Activated CD8-positive, alpha-beta T cell treated with anti-CD3 and anti-CD28 coated beads for 36 hours (primary cell): ENCODE measurements at regions of chr14 and their contacts with region 1.

Region 1: DNA sequence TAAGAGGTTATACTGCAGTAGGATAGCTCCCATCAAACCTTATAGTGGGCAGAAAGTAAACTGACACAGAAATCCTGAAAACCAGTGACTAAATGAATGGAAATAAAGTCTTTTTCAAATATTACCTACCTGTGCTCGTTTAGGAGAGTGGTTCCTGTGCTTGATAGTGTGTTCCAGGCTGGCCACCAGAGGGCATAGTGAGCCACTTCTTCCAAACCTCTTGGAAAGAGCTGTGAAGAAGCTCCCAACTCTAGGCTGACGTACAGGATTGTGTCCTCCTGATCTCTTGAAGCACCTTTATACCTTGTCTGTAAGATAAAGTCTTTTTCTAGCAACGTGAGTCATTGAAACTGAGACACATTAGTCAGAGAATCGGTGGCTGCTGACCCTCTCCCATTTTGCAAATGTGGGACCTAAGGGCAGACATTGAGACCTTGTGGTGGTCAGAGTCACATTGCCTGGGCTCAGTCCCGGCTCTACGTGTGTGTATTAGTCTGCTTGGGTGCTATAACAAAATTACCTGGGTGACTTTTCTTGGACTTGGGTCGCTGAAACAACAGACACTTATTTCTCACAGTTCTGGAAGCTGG is 17.6 kb downstream of the TDP1 start:
- DNase-seq: peak; percentile 62
- ATAC-seq: peak; percentile 53
- H3K4me3 Mint-ChIP-seq: no peak overlapping the region
- H3K27ac Mint-ChIP-seq: no peak overlapping the region
- H3K4me1 Mint-ChIP-seq: peaks cover 8% of the 10 kb centered on the region
- H3K27me3 Mint-ChIP-seq: no peaks in the 10 kb centered on the region
- CTCF ChIP-seq: peak; percentile 66

Region 2: DNA sequence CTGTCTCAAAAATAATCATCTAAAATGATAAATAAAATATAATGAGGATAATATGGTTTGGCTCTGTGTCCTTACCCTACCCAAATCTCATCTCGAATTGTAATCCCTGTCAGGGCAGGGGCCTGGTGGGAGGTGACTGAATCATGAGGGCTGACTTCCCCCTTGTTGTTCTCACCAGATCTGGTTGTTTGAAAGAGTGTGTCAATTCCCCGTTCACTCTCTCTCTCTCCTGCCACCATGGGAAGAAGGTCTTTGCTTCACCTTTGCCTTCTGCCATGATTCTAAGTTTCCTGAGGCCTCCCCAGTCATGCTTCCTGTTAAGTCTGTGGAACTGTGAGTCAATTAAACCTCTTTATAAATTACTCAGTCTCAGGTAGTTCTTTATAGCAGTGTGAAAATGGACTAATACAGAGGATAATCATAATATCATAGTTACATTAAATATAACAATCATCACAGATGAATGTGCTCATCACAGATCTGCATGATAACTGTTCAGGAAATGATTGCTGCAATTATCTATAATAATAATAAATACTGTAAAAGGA is 31.4 kb before region 1 on chr14:
- CTCF ChIA-PET with region 1: interaction called, 76 read pairs
- POLR2A ChIA-PET with region 1: no interaction called
- intact Hi-C with region 1: no loop called
- DNase-seq: peak; percentile 6
- ATAC-seq: peak; percentile 26
- H3K4me3 Mint-ChIP-seq: no peak overlapping the region
- H3K27ac Mint-ChIP-seq: no peak overlapping the region
- H3K4me1 Mint-ChIP-seq: peaks cover 5% of the 10 kb centered on the region
- H3K27me3 Mint-ChIP-seq: no peaks in the 10 kb centered on the region
- CTCF ChIP-seq: no peak

Region 3: DNA sequence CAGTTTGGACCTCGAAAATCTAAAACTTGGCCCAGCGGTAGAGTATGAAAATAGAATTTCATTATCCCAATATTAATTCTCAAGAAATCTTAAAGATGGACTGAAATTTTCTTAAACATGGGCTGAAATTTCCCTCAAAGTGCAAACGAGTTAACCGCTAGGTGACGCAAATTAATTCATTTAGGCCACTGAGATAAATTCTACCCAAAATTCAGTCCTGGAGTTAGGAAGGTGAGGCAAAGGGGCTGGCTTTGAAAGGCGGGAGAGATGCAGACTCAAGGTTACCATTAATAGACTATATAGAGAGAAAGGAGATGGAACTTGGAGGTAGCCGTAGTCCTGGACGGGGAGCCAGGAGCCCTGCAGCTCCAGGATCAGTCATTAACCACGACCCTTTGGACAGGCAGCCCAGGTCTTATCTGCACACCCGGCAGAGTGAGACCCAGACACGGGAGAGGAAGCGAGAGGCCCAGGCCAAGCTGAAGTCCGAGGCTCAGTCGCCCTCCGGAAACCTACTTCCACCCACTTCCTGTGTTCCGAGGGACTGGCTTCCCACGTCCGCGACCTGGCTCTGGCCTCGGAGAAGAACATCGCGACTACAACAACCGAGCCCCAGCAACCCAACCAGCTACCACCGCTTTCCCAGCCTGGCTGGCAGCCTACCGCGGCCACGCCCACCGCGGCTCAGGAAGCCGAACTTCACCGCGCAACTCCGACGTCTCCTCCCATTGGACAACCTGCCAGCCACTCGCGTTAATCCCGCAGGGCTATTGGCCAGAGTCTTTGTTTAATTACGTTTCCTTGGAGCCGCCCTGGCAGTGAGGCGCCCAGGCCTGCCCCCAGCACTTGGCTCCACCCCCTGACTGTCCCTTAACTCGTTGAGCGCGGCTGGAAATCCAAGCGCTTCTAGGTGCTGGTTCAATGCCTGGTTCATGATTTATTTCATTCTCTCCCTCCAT is 19.0 kb before region 1 on chr14 and contains the start of gene EFCAB11:
- CTCF ChIA-PET with region 1: interaction called, 59 read pairs
- POLR2A ChIA-PET with region 1: interaction called, 5 read pairs
- intact Hi-C with region 1: no loop called
- DNase-seq: peak; percentile 97
- ATAC-seq: peak; percentile 86
- H3K4me3 Mint-ChIP-seq: peak within 1 kb of the TSS; percentile 92
- H3K27ac Mint-ChIP-seq: peak within 1 kb of the TSS; percentile 92
- H3K4me1 Mint-ChIP-seq: peaks cover 31% of the 10 kb centered on the region
- H3K27me3 Mint-ChIP-seq: no peaks in the 10 kb centered on the region
- CTCF ChIP-seq: no peak
- total RNA-seq, gene EFCAB11: 6.6 to 8.4 TPM

Region 4: GRCh38 chr14:89983375-89983774 is 10.0 kb after region 1 on chr14:
- CTCF ChIA-PET with region 1: interaction called, 18 read pairs
- POLR2A ChIA-PET with region 1: no interaction called
- intact Hi-C with region 1: no loop called
- DNase-seq: no peak
- ATAC-seq: no peak
- H3K4me3 Mint-ChIP-seq: no peak overlapping the region
- H3K27ac Mint-ChIP-seq: no peak overlapping the region
- H3K4me1 Mint-ChIP-seq: no peaks in the 10 kb centered on the region
- H3K27me3 Mint-ChIP-seq: no peaks in the 10 kb centered on the region
- CTCF ChIP-seq: no peak

Region 5: GRCh38 chr14:90003908-90004307 is 30.6 kb after region 1 on chr14:
- CTCF ChIA-PET with region 1: interaction called, 18 read pairs
- POLR2A ChIA-PET with region 1: no interaction called
- intact Hi-C with region 1: no loop called
- DNase-seq: no peak
- ATAC-seq: peak; percentile 56
- H3K4me3 Mint-ChIP-seq: no peak overlapping the region
- H3K27ac Mint-ChIP-seq: peak overlapping the region; percentile 15
- H3K4me1 Mint-ChIP-seq: peaks cover 11% of the 10 kb centered on the region
- H3K27me3 Mint-ChIP-seq: no peaks in the 10 kb centered on the region
- CTCF ChIP-seq: no peak

Region 6: DNA sequence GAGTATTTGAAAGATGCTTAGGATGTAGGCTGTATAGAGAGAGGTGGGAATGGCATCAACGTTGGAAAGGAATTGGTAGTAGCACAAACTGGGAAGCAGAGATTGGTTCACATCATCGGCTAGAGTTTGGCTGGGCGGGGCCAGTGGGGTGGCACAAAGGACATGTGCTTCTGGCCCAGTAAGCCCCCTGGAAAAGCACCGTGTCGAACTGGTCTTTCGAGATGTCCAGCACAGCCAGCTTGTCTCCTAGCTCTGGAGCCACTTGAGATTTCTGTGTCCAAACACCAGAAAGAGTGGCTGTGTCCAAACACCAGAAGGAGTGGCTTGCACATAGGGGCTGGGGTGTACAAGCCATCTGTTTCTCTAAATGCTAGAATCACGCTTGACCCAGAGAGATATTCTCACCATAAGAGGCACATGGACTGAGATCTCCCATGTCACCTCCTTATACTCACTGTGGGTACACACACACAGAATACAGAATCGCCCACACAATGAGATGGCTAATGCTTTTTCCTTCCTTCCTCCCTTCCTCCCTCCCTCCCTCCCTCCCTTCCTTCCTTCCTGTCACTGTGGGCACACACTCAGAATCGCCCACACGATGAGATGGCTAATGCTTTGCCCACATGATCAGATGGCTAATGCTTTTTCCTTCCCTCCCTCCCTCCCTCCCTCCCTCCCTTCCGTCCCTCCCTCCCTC is 46.6 kb after region 1 on chr14:
- CTCF ChIA-PET with region 1: interaction called, 11 read pairs
- POLR2A ChIA-PET with region 1: no interaction called
- intact Hi-C with region 1: no loop called
- DNase-seq: peak; percentile 6
- ATAC-seq: peak; percentile 42
- H3K4me3 Mint-ChIP-seq: no peak overlapping the region
- H3K27ac Mint-ChIP-seq: peak overlapping the region; percentile 54
- H3K4me1 Mint-ChIP-seq: peaks cover 9% of the 10 kb centered on the region
- H3K27me3 Mint-ChIP-seq: no peaks in the 10 kb centered on the region
- CTCF ChIP-seq: no peak

Region 7: GRCh38 chr14:90235179-90235976 is 262.0 kb after region 1 on chr14:
- CTCF ChIA-PET with region 1: interaction called, 13 read pairs
- POLR2A ChIA-PET with region 1: no interaction called
- intact Hi-C with region 1: no loop called
- DNase-seq: peak; percentile 75
- ATAC-seq: peak; percentile 87
- H3K4me3 Mint-ChIP-seq: no peak overlapping the region
- H3K27ac Mint-ChIP-seq: no peak overlapping the region
- H3K4me1 Mint-ChIP-seq: no peaks in the 10 kb centered on the region
- H3K27me3 Mint-ChIP-seq: peaks cover 10% of the 10 kb centered on the region
- CTCF ChIP-seq: peak; percentile 99